Sigmoid colon (tissue), 7 donors: ENCODE measurements at regions of chr2 and their contacts with region 1.

Region 1: GRCh38 chr2:225122583-225123486 is 80.6 kb upstream of the DOCK10 start:
- DNase-seq: no peak
- H3K4me3 ChIP-seq: no peak overlapping the region
- H3K27ac ChIP-seq: no peak overlapping the region
- H3K4me1 ChIP-seq: no peaks in the 10 kb centered on the region
- H3K27me3 ChIP-seq: no peaks in the 10 kb centered on the region
- CTCF ChIP-seq: peak in 1 of 4 experiments; percentile 46
- EP300 ChIP-seq: no peak
- POLR2A ChIP-seq: no peak

Region 2: DNA sequence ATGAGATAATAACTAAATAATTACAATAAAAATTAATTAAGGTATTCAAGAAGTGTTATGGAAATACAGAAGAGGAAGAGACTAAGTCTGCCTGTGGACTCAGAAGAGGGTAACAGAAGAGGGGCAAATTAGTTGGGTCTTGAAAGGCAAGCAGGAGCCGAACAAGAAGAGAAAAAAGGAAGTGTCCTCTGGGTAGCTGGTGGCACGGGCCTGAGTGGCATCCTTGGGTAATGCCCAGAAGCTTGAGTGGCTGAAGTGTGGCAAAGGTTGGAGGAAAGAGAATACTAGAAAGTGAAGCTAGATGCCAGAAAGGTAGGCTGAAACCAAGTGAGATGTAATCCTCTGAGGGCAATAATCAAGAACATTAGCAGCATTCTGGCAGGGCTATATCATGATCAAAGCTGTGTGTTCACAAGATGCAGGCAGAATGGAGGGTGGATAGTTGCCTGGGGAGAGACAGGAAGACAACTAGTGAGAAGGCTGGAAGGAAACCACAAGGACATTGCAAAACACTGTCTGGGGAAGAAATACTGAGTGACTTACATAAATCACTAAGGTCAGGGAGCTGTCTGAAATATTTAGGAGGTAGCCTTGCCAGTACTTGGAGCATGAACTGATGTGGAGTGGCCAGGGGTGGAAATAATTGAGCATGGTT is 96.8 kb before region 1 on chr2:
- intact Hi-C with region 1: no loop called
- DNase-seq: no peak
- H3K4me3 ChIP-seq: no peak overlapping the region
- H3K27ac ChIP-seq: no peak overlapping the region
- H3K4me1 ChIP-seq: no peaks in the 10 kb centered on the region
- H3K27me3 ChIP-seq: no peaks in the 10 kb centered on the region
- CTCF ChIP-seq: no peak
- EP300 ChIP-seq: no peak
- POLR2A ChIP-seq: no peak

Region 3: DNA sequence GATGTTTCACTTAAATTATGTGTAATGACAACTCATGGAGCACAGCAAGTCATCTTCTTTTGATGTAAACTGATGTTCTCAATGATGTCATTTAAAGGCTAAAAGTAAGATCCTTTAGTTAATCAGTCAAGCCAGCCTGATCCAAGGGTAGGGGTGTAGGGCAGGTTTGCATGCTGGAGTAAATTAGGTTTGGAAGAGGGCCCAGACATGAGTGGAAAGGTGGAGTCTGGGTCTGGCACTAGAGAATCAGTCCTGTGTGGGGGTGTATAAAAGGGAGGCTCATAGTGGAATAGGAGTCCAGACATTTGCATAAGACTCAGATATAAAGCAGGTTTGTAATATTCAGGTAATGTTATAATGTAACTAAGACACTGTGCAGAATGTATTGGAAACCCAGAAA is 187.9 kb after region 1 on chr2:
- intact Hi-C with region 1: no loop called
- DNase-seq: no peak
- H3K4me3 ChIP-seq: no peak overlapping the region
- H3K27ac ChIP-seq: no peak overlapping the region
- H3K4me1 ChIP-seq: no peaks in the 10 kb centered on the region
- H3K27me3 ChIP-seq: no peaks in the 10 kb centered on the region
- CTCF ChIP-seq: no peak
- EP300 ChIP-seq: no peak
- POLR2A ChIP-seq: no peak

Region 4: DNA sequence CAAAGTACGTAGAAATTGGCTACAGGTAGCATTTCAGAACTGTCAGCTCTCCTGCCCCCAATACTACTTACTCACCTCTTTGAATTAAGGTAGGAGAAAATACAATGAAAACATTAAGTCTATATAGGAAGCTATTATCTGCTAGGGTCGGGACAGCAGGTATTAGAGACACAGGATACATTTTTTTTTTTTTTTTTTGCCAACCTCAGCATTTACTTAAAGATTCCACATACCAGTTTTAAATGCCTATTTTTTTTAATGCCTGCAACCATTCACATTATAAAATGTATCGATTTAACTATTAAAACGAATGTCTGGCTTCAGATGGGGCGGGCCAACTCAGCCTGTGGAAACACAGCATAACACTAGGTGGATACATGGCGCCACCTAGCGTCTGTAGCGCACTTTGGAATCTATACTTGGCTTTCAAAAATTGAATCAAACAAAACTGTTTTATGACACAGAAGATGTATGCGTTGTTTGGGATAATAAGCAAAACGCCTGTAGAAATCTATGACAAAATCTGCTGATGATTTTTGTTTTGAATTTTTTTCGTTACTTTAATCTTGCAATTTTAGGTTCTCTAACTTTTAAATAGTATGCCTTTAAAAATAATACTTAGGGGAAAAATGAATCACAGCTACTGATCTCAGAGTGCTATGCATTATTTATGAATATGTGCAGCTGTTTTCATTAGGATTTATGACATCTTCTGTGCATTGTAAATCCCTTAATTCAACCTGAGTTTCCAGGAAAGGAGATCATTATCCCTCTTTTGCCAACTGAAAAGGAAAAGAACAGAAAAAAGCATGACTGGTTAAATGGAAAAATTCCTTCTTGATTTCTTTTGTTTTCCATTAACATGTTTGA is 537.7 kb after region 1 on chr2:
- intact Hi-C with region 1: loop called (anchors 2 kb)
- DNase-seq: peak; percentile 76
- H3K4me3 ChIP-seq: no peak overlapping the region
- H3K27ac ChIP-seq: no peak overlapping the region
- H3K4me1 ChIP-seq: no peaks in the 10 kb centered on the region
- H3K27me3 ChIP-seq: no peaks in the 10 kb centered on the region
- CTCF ChIP-seq: peak; percentile 21 to 81 (median 56)
- EP300 ChIP-seq: no peak
- POLR2A ChIP-seq: no peak